ENCODE measurements at regions of chr5 and their contacts with region 1.

Region 1: DNA sequence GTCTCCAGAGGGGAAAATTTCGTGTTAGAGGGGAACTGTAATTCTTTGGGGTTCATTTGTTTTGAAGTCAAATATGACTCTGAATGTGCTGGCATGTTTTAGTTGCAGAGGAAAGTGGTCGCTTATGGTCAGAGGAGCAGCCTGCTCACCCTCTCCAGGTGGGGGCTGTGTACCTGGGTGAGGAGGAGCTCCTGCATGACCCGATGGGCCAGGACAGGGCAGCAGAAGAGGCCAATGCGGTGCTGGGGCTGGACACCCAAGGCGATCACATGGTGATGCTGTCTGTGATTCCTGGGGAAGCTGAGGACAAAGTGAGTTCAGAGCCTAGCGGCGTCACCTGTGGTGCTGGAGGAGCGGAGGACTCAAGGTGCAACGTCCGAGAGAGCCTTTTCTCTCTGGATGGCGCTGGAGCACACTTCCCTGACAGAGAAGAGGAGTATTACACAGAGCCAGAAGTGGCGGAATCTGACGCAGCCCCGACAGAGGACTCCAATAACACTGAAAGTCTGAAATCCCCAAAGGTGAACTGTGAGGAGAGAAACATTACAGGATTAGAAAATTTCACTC is 13.5 kb downstream of the TXNDC15 start:
- DNase-seq: no peak
- ATAC-seq: no peak
- H3K4me3 Mint-ChIP-seq: no peak overlapping the region
- H3K27ac Mint-ChIP-seq: no peak overlapping the region
- H3K4me1 Mint-ChIP-seq: peaks cover 2% of the 10 kb centered on the region
- H3K27me3 Mint-ChIP-seq: no peaks in the 10 kb centered on the region
- CTCF ChIP-seq: no peak

Region 2: GRCh38 chr5:134857401-134857800 is 30.3 kb before region 1 on chr5:
- CTCF ChIA-PET with region 1: no interaction called
- POLR2A ChIA-PET with region 1: no interaction called
- intact Hi-C with region 1: no loop called
- DNase-seq: no peak
- ATAC-seq: no peak
- H3K4me3 Mint-ChIP-seq: no peak overlapping the region
- H3K27ac Mint-ChIP-seq: no peak overlapping the region
- H3K4me1 Mint-ChIP-seq: peaks cover 18% of the 10 kb centered on the region
- H3K27me3 Mint-ChIP-seq: no peaks in the 10 kb centered on the region
- CTCF ChIP-seq: no peak

Region 3: GRCh38 chr5:134873987-134874830 is 13.5 kb before region 1 on chr5 and contains the start of gene TXNDC15:
- CTCF ChIA-PET with region 1: interaction called, 4 read pairs
- POLR2A ChIA-PET with region 1: interaction called, 10 read pairs
- intact Hi-C with region 1: no loop called
- DNase-seq: peak; percentile 87
- ATAC-seq: peak; percentile 87
- H3K4me3 Mint-ChIP-seq: peak within 1 kb of the TSS; percentile 85
- H3K27ac Mint-ChIP-seq: peak within 1 kb of the TSS; percentile 94
- H3K4me1 Mint-ChIP-seq: peaks cover 32% of the 10 kb centered on the region
- H3K27me3 Mint-ChIP-seq: no peaks in the 10 kb centered on the region
- CTCF ChIP-seq: no peak
- total RNA-seq, gene TXNDC15: 17.1 to 26.7 TPM

Region 4: GRCh38 chr5:135094339-135095051 is 206.8 kb after region 1 on chr5:
- CTCF ChIA-PET with region 1: no interaction called
- POLR2A ChIA-PET with region 1: no interaction called
- intact Hi-C with region 1: no loop called
- DNase-seq: no peak
- ATAC-seq: no peak
- H3K4me3 Mint-ChIP-seq: no peak overlapping the region
- H3K27ac Mint-ChIP-seq: no peak overlapping the region
- H3K4me1 Mint-ChIP-seq: no peaks in the 10 kb centered on the region
- H3K27me3 Mint-ChIP-seq: peaks cover 11% of the 10 kb centered on the region
- CTCF ChIP-seq: no peak